ENCODE measurements at regions of chr1 and their contacts with region 1.

Region 1: GRCh38 chr1:100459358-100460114 is 78.4 kb upstream of the GPR88 start:
- DNase-seq: peak; percentile 51
- CTCF ChIP-seq: peak; percentile 76

Region 2: DNA sequence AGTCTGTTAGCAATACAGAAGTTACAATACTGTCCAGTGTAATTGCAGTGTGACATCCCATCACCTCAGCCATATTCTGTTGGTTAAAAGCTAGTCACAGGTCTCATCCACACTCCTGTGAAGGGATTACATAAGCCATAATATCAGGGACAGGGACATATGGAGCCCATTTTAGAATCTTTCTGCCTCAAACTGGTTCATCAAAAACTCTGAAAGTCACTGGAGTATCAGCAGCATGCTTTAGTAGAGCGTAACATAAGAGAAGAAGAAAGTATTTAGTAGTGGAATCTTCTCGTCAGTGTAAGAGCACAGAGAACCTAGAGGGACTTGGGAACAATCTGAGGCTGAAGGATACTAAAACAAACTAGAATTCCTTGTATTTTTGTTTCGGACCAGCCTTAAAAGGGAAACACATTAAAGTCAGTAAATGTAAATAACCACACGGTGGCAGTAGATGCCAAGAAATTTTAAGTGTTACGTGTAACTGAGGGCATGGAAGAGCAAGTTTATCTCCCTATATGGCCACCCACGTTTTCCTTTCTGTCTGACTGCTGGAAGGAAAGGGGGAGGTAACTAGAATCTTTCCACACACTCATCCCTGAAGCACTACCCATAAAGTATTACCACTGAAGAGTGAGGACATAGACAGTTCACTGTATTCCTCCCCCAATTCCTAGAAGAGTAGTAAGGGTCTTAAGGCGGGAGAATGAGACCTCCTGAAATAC is 651.0 kb before region 1 on chr1:
- in situ Hi-C with region 1: loop called (anchors 10 kb)
- DNase-seq: peak; percentile 63
- CTCF ChIP-seq: peak; percentile 61

Measured in GM13976 (cell line).